Common myeloid progenitor, CD34-positive (primary cell): ENCODE measurements at regions of chr7 and their contacts with region 1.

Region 1: DNA sequence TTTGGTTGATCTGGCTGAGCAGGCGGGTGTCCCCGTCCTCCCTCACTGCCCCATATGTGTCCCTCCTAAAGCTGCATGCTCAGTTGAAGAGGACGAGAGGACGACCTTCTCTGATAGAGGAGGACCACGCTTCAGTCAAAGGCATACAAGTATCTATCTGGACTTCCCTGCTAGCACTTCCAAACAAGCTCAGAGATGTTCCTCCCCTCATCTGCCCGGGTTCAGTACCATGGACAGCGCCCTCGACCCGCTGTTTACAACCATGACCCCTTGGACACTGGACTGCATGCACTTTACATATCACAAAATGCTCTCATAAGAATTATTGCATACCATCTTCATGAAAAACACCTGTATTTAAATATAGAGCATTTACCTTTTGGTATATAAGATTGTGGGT is 26.9 kb upstream of the TRIM56 start:
- DNase-seq: peak; percentile 39 to 74 (median 67)
- H3K4me3 ChIP-seq: no peak overlapping the region
- H3K27ac ChIP-seq: no peak overlapping the region
- H3K4me1 ChIP-seq: peaks cover 0 to 2% (median 0%) of the 10 kb centered on the region in 4 experiments
- H3K27me3 ChIP-seq: peaks cover 5 to 46% (median 19%) of the 10 kb centered on the region in 5 experiments

Region 2: GRCh38 chr7:100894860-100895421 is 163.4 kb before region 1 on chr7:
- CTCF ChIA-PET with region 1: interaction called, 19 read pairs
- POLR2A ChIA-PET with region 1: no interaction called
- DNase-seq: peak in 2 of 3 donors; percentile 53 to 62
- H3K4me3 ChIP-seq: peak overlapping the region in 4 of 7 experiments; percentile 50 to 62 (median 54)
- H3K27ac ChIP-seq: no peak overlapping the region
- H3K4me1 ChIP-seq: peaks cover 0 to 39% (median 34%) of the 10 kb centered on the region in 4 experiments
- H3K27me3 ChIP-seq: peaks cover 5 to 71% (median 21%) of the 10 kb centered on the region in 5 experiments

Region 3: DNA sequence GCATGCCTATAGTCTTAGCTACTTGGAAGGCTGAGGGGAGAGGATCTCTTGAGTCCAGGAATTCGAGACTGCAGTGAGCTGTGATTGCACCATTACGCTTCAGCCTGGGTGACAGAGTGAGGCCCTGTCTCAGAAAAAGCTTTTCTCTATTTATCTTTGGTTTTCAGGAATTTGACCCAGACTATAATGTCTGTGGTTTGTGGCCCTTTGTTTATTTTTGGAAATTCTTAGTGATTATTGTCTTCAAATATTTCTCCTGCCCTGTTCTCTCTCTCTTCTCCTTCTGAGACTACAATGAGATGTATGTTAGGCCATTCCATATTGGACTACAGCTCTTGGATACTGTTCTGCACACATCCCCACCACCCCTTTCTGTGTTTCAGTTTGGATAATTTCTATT is 84.3 kb before region 1 on chr7:
- CTCF ChIA-PET with region 1: interaction called, 11 read pairs
- POLR2A ChIA-PET with region 1: no interaction called
- DNase-seq: no peak
- H3K4me3 ChIP-seq: no peak overlapping the region
- H3K27ac ChIP-seq: no peak overlapping the region
- H3K4me1 ChIP-seq: no peaks in the 10 kb centered on the region
- H3K27me3 ChIP-seq: peaks cover 0 to 34% (median 0%) of the 10 kb centered on the region in 5 experiments